ENCODE measurements at regions of chr1 and their contacts with region 1.

Region 1: DNA sequence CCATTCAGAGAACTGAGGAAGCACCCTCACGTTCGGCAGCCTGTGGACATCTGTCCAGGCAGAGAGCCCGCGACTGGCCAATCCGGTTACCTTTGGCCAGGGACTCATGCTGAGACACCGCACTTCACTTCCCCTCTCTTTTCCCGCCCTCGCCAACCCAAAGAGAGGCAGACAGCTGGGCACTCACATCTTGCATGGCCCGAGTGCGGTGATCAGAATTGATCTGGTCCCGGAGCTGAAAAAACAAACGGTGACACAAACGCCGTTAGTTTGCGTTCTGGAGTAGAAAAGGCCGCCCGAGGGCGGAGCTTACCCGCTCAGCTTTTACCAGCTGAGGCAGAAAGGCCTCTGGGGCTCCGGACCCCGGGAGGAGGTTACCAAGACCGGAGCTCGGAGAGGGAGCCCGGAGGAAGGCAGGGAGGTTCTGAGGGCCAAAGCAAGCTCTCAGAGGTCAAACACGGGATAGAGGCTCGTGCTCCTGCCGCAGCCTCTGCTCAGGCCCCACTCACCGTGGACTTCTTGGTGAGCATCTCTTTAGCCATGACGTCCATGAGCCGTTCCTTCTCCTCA is 376 bp downstream of the SF3A3 start:
- DNase-seq: no peak
- ATAC-seq: no peak

Region 2: GRCh38 chr1:38012363-38013226 is 23.1 kb after region 1 on chr1 and contains the start of gene UTP11:
- intact Hi-C with region 1: loop called (anchors 1 kb)
- DNase-seq: peak; percentile 96
- ATAC-seq: peak; percentile 97
- total RNA-seq, gene UTP11: 42.3 TPM

Measured in Right ventricle myocardium inferior (tissue), 1 donor.